OCI-LY7 (cell line): ENCODE measurements at regions of chr22 and their contacts with region 1.

Region 1: GRCh38 chr22:17258015-17258787 is 39.0 kb upstream of the ADA2 start:
- DNase-seq: peak; percentile 93
- H3K4me3 ChIP-seq: peak overlapping the region; percentile 44
- H3K27ac ChIP-seq: peak overlapping the region; percentile 84
- H3K4me1 ChIP-seq: peaks cover 23% of the 10 kb centered on the region
- CTCF ChIP-seq: no peak

Region 2: GRCh38 chr22:16925407-16925966 is 332.7 kb before region 1 on chr22:
- CTCF ChIA-PET with region 1: no interaction called
- POLR2A ChIA-PET with region 1: no interaction called
- intact Hi-C with region 1: loop called (anchors 5 kb)
- DNase-seq: no peak
- H3K4me3 ChIP-seq: no peak overlapping the region
- H3K27ac ChIP-seq: no peak overlapping the region
- H3K4me1 ChIP-seq: peaks cover 47% of the 10 kb centered on the region
- CTCF ChIP-seq: no peak

Region 3: DNA sequence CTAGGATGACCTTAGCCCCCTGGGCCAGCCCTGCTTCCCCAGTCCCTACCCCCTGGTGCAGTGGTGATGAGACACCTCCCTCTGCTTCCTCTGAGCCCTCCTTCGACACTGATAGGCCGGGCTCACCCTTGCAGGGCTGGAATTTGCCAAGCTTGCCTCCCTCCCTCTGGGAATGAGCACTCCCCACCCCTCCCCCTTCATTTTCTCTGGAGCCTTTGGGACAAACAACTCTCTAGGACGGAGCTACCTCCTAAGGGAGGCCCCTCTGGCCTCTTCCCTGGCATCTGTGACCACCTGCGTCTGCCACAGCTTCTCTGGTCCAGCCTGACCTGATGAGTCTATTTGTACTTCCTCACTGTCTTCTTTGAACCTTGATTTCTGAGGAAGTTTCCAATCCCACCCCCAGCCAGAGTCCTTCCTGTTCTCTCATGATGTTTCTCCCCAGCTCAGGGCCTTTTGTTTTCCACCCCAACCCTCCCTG is 14.3 kb after region 1 on chr22:
- CTCF ChIA-PET with region 1: no interaction called
- POLR2A ChIA-PET with region 1: interaction called, 17 read pairs
- intact Hi-C with region 1: no loop called
- DNase-seq: no peak
- H3K4me3 ChIP-seq: no peak overlapping the region
- H3K27ac ChIP-seq: no peak overlapping the region
- H3K4me1 ChIP-seq: peaks cover 11% of the 10 kb centered on the region
- CTCF ChIP-seq: no peak

Region 4: DNA sequence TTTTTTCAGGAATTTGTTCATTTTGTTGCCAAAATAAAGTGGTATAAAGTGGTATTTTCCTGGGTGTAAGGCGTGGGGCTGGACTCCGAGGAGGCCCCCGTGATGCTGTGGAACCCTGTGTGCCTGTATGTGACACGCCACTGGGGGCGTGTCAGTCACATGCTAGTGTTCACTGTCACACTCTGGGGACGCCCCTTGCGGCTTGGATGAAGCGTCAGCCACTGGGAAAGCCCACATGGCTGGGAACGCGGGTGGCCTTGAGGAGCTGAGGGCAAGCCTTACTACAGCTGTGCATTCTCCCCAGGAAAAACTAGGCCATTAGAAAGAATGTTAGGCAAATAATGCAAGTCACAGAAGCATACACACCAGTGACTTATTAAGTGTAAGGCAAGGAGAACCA is 228.1 kb after region 1 on chr22:
- CTCF ChIA-PET with region 1: no interaction called
- POLR2A ChIA-PET with region 1: no interaction called
- intact Hi-C with region 1: loop called (anchors 5 kb)
- DNase-seq: no peak
- H3K4me3 ChIP-seq: no peak overlapping the region
- H3K27ac ChIP-seq: no peak overlapping the region
- H3K4me1 ChIP-seq: no peaks in the 10 kb centered on the region
- CTCF ChIP-seq: 0 out of 2 replicates have a peak, but pooled peaks have one; percentile 22